Common myeloid progenitor, CD34-positive (primary cell): ENCODE measurements at regions of chr7 and their contacts with region 1.

Region 1: GRCh38 chr7:129367700-129368388 is 66.4 kb upstream of the STRIP2 start:
- DNase-seq: peak; percentile 70 to 86 (median 80)
- H3K4me3 ChIP-seq: peak overlapping the region in 4 of 7 experiments; percentile 8 to 67 (median 50)
- H3K27ac ChIP-seq: no peak overlapping the region
- H3K4me1 ChIP-seq: peaks cover 5 to 23% (median 14%) of the 10 kb centered on the region in 4 experiments
- H3K27me3 ChIP-seq: no peaks in the 10 kb centered on the region

Region 2: GRCh38 chr7:129343099-129343700 is 24.6 kb before region 1 on chr7:
- CTCF ChIA-PET with region 1: interaction called, 26 read pairs
- POLR2A ChIA-PET with region 1: no interaction called
- DNase-seq: peak; percentile 63 to 78 (median 71)
- H3K4me3 ChIP-seq: no peak overlapping the region
- H3K27ac ChIP-seq: no peak overlapping the region
- H3K4me1 ChIP-seq: peaks cover 0 to 11% (median 0%) of the 10 kb centered on the region in 4 experiments
- H3K27me3 ChIP-seq: no peaks in the 10 kb centered on the region

Region 3: DNA sequence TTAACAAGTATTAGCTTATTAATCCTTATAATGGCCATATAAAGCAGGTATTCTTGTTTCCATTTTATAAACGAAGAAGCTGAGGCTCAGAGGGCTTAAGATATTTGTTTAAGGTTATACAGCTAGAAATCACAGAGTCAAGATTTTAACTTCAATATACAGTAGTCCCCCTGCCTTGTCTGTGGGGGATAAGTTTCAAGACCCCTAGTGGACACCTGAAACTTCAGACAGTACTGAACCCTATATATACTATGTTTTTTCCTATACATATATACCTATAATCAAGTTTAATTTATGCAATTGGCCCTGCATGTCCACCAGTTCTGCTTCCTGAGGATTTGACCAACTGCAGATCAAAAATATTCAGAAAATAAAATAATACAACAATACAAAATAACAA is 22.0 kb after region 1 on chr7:
- CTCF ChIA-PET with region 1: interaction called, 35 read pairs
- POLR2A ChIA-PET with region 1: no interaction called
- DNase-seq: no peak
- H3K4me3 ChIP-seq: no peak overlapping the region
- H3K27ac ChIP-seq: no peak overlapping the region
- H3K4me1 ChIP-seq: no peaks in the 10 kb centered on the region
- H3K27me3 ChIP-seq: no peaks in the 10 kb centered on the region

Region 4: DNA sequence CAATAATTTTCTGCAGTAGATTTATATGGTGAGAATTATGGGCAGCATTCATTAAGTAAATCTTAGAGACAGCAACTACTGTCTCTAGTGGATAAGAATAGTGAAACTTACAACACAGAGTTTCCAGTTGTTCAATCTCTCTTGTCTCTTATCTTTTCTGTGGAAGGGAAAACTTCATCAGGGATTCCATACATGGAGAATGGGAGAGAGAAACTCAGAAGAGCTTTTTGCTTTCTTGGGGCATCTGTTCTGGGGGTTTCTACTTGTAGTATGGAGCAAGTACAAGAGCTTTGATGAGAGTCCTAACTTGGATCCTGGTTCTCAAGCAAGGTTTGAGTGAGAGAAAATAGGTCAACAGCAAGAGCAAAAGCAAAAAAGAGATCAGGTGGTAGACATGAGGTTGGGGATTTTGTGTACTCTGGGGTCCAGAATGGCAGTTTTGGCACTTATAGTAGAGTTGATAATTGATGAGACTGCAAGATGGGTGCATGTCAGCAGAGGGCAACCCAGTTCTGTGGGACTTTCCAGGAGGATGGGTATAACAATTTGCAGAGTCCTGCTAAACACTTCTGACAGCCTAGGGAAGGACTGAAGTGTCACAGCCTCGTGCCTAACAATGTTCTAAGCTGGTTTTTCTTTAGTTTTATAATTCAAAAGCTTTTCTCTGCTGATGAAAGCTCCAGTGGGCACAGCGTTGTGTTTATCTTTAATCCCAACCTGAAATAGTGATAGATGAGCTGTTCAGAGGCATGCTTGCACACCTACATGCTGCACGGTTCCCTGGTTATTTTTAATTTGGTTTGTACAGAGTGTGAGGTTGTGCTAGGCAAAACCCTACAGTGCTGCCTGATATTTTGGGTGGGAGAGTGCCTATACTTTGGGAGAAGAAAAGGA is 34.4 kb after region 1 on chr7:
- CTCF ChIA-PET with region 1: interaction called, 14 read pairs
- POLR2A ChIA-PET with region 1: no interaction called
- DNase-seq: peak in 1 of 3 donors; percentile 1
- H3K4me3 ChIP-seq: no peak overlapping the region
- H3K27ac ChIP-seq: peak overlapping the region in 1 of 2 experiments; percentile 54
- H3K4me1 ChIP-seq: peaks cover 0 to 23% (median 16%) of the 10 kb centered on the region in 4 experiments
- H3K27me3 ChIP-seq: no peaks in the 10 kb centered on the region

Region 5: GRCh38 chr7:129433847-129434674 is 66.2 kb after region 1 on chr7 and contains the start of gene STRIP2:
- CTCF ChIA-PET with region 1: interaction called, 12 read pairs
- POLR2A ChIA-PET with region 1: interaction called, 4 read pairs
- DNase-seq: peak; percentile 70 to 80 (median 74)
- H3K4me3 ChIP-seq: peak within 1 kb of the TSS; percentile 63 to 82 (median 72)
- H3K27ac ChIP-seq: no peak within 1 kb of the TSS
- H3K4me1 ChIP-seq: peaks cover 2 to 25% (median 20%) of the 10 kb centered on the region in 4 experiments
- H3K27me3 ChIP-seq: peaks cover 4 to 40% (median 15%) of the 10 kb centered on the region in 5 experiments

Region 6: GRCh38 chr7:129468087-129468486 is 100.2 kb after region 1 on chr7:
- CTCF ChIA-PET with region 1: interaction called, 225 read pairs
- POLR2A ChIA-PET with region 1: no interaction called
- DNase-seq: no peak
- H3K4me3 ChIP-seq: no peak overlapping the region
- H3K27ac ChIP-seq: no peak overlapping the region
- H3K4me1 ChIP-seq: no peaks in the 10 kb centered on the region
- H3K27me3 ChIP-seq: no peaks in the 10 kb centered on the region

Region 7: GRCh38 chr7:129644634-129645230 is 276.9 kb after region 1 on chr7:
- CTCF ChIA-PET with region 1: interaction called, 22 read pairs
- POLR2A ChIA-PET with region 1: no interaction called
- DNase-seq: peak; percentile 52 to 71 (median 63)
- H3K4me3 ChIP-seq: no peak overlapping the region
- H3K27ac ChIP-seq: no peak overlapping the region
- H3K4me1 ChIP-seq: peaks cover 0 to 7% (median 0%) of the 10 kb centered on the region in 4 experiments
- H3K27me3 ChIP-seq: no peaks in the 10 kb centered on the region